ENCODE measurements at regions of chr2 and their contacts with region 1.

Region 1: DNA sequence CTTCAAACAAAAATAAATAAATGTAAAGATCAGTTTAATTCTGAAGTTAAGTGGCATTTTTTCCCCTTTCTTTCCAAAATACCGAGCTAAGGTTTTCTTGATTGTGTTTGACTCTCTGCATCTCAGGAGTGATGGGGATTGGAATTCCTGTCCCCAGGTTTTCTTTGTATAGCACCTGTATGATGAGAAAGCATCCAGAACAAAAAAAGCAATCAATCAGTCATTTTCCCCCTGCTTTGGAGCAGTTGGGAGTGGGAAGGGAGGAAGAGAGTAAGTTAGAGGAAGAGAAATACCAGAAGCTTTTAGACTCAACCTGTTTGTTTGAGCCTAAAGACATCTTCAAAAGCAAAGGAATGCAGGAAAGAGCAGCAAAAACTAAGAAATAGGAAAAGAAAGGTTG is 88.5 kb downstream of the RIF1 start:
- DNase-seq: no peak
- ATAC-seq: no peak
- H3K4me3 ChIP-seq: no peak overlapping the region
- H3K27ac ChIP-seq: no peak overlapping the region
- H3K4me1 ChIP-seq: no peaks in the 10 kb centered on the region
- H3K27me3 ChIP-seq: no peaks in the 10 kb centered on the region
- CTCF ChIP-seq: no peak

Region 2: DNA sequence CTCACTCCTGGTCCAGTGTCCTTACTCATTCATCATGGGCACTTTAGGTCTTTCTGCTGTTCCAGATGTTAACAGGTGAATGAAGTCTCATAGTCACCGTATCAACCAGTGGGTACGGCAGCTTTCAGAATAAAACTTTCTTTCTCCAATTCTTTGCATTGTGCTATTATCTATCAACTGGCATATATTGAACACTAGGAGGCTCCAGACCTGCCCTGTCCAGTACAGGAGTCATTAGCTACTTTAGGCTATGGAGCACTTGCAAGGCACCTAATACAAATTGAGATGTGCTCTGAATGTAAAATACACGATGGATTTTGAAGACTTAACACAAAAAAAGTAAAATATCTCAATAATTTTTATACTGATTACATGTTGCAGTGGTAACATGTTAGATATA is 279.3 kb after region 1 on chr2:
- CTCF ChIA-PET with region 1: interaction called, 12 read pairs
- POLR2A ChIA-PET with region 1: no interaction called
- intact Hi-C with region 1: no loop called
- DNase-seq: no peak
- ATAC-seq: no peak
- H3K4me3 ChIP-seq: no peak overlapping the region
- H3K27ac ChIP-seq: no peak overlapping the region
- H3K4me1 ChIP-seq: peaks cover 17% of the 10 kb centered on the region
- H3K27me3 ChIP-seq: no peaks in the 10 kb centered on the region
- CTCF ChIP-seq: peak; percentile 48

Measured in PC-3 (cell line).